Activated T-helper 1 cell treated with anti-CD3 and anti-CD28 coated beads, Interleukin-12 subunit alpha, Interleukin-12 subunit beta, Interleukin-2, Interleukin-4 antibody, amounts not matched to agents 30 ng/mL and 10 ng/mL and 1 ng/mL, durations not matched to agents 14 hours and 24 hours and 36 hours (primary cell): ENCODE measurements at regions of chr10 and their contacts with region 1.

Region 1: GRCh38 chr10:70587045-70587658 is 15.4 kb downstream of the PRF1 start:
- DNase-seq: no peak
- H3K4me3 Mint-ChIP-seq: no peak overlapping the region
- H3K27ac Mint-ChIP-seq: peak overlapping the region; percentile 92
- H3K4me1 Mint-ChIP-seq: peaks cover 26% of the 10 kb centered on the region
- H3K27me3 Mint-ChIP-seq: peaks cover 11% of the 10 kb centered on the region

Region 2: DNA sequence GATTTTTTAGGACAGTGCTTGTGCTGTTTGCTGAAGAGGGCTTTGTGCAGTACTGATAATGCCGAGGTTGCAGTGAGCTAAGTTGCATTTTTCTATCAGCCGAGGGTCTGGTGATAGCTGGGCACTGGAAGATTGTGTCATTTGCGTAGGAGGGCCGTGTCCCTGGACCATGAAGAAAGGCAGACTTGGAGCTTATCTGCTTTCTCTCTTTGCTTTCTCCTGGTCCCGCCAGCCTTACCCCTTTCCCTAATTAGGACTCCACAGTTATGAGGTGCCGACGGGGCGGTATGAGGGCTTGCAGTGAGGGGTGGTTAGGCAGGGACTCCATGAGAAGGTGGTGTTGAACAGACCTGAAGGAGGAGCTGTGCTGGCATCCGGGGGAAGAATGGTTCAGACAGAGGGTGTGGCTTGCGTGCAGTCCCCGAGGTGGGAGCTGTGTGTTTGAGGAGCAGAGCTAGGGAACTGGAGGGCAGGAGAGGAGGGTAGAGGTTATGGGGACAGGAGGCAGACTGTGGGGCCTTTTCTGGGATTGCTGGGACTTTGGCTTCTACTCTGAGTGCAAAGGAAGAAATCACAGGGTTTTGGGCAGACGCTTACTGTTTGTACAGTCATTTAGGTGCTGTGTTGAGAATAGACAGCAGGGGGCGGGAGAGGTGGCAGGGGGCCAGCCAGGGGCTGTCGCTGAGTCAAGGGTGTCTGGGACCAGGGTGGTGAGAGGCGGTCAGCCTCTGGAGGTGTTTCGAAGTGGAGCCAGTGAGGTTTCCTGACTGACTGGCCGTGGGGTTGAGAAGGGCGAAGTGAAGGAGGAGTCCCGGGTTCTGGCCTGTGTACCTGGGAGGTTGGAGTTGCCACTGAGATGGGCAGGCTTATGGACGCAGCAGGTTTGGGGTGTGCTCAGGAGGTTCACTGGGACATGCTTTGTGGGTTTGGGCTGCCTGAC is 28.0 kb before region 1 on chr10:
- intact Hi-C with region 1: loop called (anchors 1 kb)
- DNase-seq: peak; percentile 50
- H3K4me3 Mint-ChIP-seq: peak overlapping the region; percentile 67
- H3K27ac Mint-ChIP-seq: peak overlapping the region; percentile 65
- H3K4me1 Mint-ChIP-seq: peaks cover 27% of the 10 kb centered on the region
- H3K27me3 Mint-ChIP-seq: no peaks in the 10 kb centered on the region

Region 3: GRCh38 chr10:70649526-70649925 is 62.4 kb after region 1 on chr10:
- intact Hi-C with region 1: no loop called
- DNase-seq: no peak
- H3K4me3 Mint-ChIP-seq: no peak overlapping the region
- H3K27ac Mint-ChIP-seq: no peak overlapping the region
- H3K4me1 Mint-ChIP-seq: peaks cover 6% of the 10 kb centered on the region
- H3K27me3 Mint-ChIP-seq: peaks cover 1% of the 10 kb centered on the region

Region 4: GRCh38 chr10:70693619-70694335 is 106.6 kb after region 1 on chr10:
- intact Hi-C with region 1: no loop called
- DNase-seq: no peak
- H3K4me3 Mint-ChIP-seq: no peak overlapping the region
- H3K27ac Mint-ChIP-seq: no peak overlapping the region
- H3K4me1 Mint-ChIP-seq: no peaks in the 10 kb centered on the region
- H3K27me3 Mint-ChIP-seq: no peaks in the 10 kb centered on the region